CD4-positive, alpha-beta memory T cell (primary cell): ENCODE measurements at regions of chr1 and their contacts with region 1.

Region 1: DNA sequence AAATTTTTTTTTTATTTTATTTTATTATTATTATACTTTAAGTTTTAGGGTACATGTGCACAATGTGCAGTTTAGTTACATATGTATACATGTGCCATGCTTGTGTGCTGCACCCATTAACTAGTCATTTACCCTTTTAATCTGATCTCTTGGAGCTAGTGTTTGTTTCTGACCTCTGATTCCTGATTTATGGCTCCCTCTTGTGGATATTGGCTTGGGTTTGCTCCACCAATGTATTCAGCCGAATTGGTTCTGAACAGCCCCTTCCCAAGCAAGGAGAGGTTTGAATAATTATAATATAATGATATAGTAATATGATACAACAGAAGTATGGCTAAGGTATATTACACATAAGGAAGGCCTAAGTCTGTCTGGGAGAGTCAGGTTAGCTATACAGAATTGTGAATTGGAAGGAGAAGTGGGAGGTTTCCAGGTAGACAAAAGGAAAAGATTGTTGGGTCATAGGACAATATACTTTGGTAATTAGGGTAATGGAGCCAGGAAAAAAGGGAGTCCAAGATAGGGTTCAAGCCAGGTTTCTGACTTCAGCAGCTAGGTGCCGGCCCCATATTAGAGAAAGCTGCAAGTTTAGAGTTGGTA is 53.1 kb upstream of the HMCN1 start:
- DNase-seq: peak in 4 of 5 donors; percentile 36 to 43 (median 38)
- H3K4me3 ChIP-seq: no peak overlapping the region
- H3K4me3 Mint-ChIP-seq: peak overlapping the region in 1 of 8 donors; percentile 34
- H3K27ac ChIP-seq: no peak overlapping the region
- H3K27ac Mint-ChIP-seq: no peak overlapping the region
- H3K4me1 ChIP-seq: peaks cover 26% of the 10 kb centered on the region
- H3K4me1 Mint-ChIP-seq: peaks cover 19 to 32% (median 26%) of the 10 kb centered on the region in 4 donors
- H3K27me3 ChIP-seq: no peaks in the 10 kb centered on the region
- H3K27me3 Mint-ChIP-seq: no peaks in the 10 kb centered on the region

Region 2: DNA sequence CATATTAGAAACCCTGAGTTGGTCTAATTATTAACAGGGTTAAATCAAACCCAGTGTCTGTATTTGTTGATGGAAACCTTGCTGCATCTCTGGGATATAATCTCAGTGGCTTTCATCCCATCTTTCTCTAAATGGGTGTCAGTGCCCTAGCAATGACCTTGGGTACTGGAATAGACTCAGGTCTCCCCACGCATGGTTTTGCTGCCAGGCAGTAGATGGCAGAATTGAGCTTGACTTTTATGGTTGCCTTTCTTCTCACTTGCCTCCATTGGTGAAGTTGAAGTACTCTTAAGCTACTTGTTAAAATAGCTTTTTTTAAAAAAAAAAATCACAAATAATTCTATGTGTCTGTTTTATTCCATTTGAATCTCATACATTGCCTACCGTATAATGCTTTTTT is 28.8 kb before region 1 on chr1:
- CTCF ChIA-PET with region 1: interaction called, 65 read pairs
- POLR2A ChIA-PET with region 1: no interaction called
- intact Hi-C with region 1: no loop called
- DNase-seq: peak in 1 of 5 donors; percentile 4
- H3K4me3 ChIP-seq: no peak overlapping the region
- H3K4me3 Mint-ChIP-seq: peak overlapping the region in 1 of 8 donors; percentile 46
- H3K27ac ChIP-seq: no peak overlapping the region
- H3K27ac Mint-ChIP-seq: no peak overlapping the region
- H3K4me1 ChIP-seq: peaks cover 6% of the 10 kb centered on the region
- H3K4me1 Mint-ChIP-seq: peaks cover 9 to 17% (median 10%) of the 10 kb centered on the region in 4 donors
- H3K27me3 ChIP-seq: no peaks in the 10 kb centered on the region
- H3K27me3 Mint-ChIP-seq: no peaks in the 10 kb centered on the region

Region 3: DNA sequence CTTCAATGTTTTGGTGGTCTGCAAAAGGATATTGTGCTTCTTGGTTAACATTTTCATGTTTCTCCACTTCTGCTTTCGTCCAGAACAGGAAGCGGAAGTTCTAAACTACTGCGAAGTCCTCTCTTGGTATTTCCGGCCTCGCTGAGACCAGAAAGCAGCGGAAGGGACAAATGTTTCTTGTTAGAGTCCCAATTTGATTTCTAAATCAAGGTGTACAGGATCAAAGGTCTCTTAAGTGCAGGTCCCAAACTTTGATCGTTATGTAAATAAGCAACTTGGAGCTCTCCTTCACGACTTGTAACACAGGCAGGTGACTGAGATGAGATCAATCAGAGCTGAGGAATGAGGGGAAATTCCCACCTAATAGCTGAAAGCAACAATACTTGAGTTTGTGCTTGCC is 12.9 kb after region 1 on chr1:
- CTCF ChIA-PET with region 1: interaction called, 31 read pairs
- POLR2A ChIA-PET with region 1: no interaction called
- intact Hi-C with region 1: no loop called
- DNase-seq: peak in 3 of 5 donors; percentile 12 to 24 (median 17)
- H3K4me3 ChIP-seq: peak overlapping the region; percentile 4 to 53
- H3K4me3 Mint-ChIP-seq: peak overlapping the region; percentile 80 to 91 (median 86)
- H3K27ac ChIP-seq: peak overlapping the region; percentile 40
- H3K27ac Mint-ChIP-seq: peak overlapping the region; percentile 84 to 94 (median 92)
- H3K4me1 ChIP-seq: peaks cover 20% of the 10 kb centered on the region
- H3K4me1 Mint-ChIP-seq: peaks cover 13 to 19% (median 16%) of the 10 kb centered on the region in 4 donors
- H3K27me3 ChIP-seq: no peaks in the 10 kb centered on the region
- H3K27me3 Mint-ChIP-seq: peaks cover 6 to 8% of the 10 kb centered on the region in 2 donors